ENCODE measurements at regions of chr4 and their contacts with region 1.

Region 1: DNA sequence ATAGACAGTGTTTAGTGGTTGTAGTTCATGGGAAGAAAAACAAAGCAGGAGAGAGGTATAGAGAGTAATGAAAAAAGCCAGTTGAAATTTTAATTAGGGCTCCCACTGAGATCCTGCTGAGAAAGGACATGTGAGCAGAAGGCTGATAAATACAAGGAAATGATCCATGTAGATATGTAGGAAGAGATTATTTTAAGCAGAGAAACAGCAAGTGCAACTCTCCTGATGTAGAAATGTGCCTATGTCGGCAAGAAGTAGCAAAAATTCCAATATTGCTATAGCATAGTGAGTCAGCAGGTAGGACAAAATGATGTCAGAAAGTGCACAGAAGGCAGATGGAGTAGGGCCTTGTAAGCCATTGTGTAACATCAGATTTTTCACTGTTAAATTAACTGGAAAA is 1027.3 kb downstream of the PCDH18 start:
- DNase-seq: peak; percentile 1
- H3K4me3 ChIP-seq: no peak overlapping the region
- CTCF ChIP-seq: no peak

Region 2: DNA sequence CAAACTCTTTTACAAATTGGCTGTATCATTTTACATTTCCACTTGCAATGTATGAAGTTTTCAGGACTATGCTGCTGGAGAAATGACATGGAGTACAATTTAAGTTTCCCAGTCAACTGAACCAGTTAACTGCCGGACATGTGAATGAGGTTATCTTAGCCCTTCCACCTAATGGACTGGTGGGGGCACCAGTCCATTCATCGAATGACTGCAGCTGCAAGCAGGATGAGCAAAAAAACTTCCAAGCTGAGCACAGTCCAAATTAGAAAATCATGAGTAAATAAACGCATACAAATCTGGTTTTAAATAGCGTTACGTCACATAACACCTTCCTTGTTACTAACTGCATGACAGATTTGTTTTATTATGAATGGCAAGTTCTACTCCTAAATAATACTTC is 104.2 kb before region 1 on chr4:
- in situ Hi-C with region 1: loop called (anchors 5 kb)
- DNase-seq: no peak
- H3K4me3 ChIP-seq: no peak overlapping the region
- CTCF ChIP-seq: peak; percentile 18

Region 3: GRCh38 chr4:136412708-136413107 is 92.3 kb before region 1 on chr4:
- in situ Hi-C with region 1: no loop called
- DNase-seq: peak; percentile 24
- H3K4me3 ChIP-seq: no peak overlapping the region
- CTCF ChIP-seq: no peak

Region 4: GRCh38 chr4:136424052-136424451 is 81.0 kb before region 1 on chr4:
- in situ Hi-C with region 1: no loop called
- DNase-seq: no peak
- H3K4me3 ChIP-seq: no peak overlapping the region
- CTCF ChIP-seq: no peak

Region 5: DNA sequence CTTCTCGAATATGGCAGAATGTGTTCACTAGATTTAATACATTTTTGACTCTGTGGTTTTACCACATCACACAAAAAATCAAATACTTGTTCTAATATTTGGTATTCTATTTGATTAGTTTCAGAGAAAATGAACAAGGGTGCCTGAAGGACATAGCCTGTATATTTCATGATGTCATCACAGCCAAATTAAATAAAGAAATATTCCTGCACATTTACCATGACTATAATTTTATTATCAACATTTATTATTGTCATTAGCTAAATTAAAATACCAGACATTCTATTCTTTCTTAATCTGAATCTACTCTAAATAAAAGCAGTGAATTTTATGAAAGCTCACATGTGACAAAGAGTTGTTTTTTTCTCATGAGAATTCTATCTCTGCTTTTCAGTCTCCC is 46.7 kb after region 1 on chr4:
- in situ Hi-C with region 1: no loop called
- DNase-seq: no peak
- H3K4me3 ChIP-seq: no peak overlapping the region
- CTCF ChIP-seq: no peak

Region 6: DNA sequence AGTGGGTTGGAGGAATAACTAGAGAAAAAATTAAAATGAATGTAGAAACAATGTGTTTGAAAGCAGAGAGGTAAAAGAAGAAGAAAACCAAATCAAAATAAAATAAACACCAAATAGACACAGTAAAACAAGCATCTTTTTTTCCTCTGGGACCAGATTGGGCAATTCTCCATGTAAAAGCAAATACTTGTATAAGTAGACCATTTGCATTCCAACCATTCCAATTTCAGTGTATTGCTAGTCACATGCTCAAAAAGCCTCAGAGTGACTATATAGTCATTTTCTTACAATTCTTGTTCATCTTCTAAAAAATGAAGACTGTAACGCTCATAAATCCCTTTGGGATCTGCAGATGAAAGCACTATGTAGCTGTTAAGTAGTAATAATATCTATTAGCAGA is 57.8 kb after region 1 on chr4:
- in situ Hi-C with region 1: no loop called
- DNase-seq: peak; percentile 33
- H3K4me3 ChIP-seq: no peak overlapping the region
- CTCF ChIP-seq: no peak